ENCODE measurements at regions of chr10 and their contacts with region 1.

Region 1: GRCh38 chr10:116913695-116914094 is 64.4 kb downstream of the ENO4 start:
- DNase-seq: no peak

Region 2: DNA sequence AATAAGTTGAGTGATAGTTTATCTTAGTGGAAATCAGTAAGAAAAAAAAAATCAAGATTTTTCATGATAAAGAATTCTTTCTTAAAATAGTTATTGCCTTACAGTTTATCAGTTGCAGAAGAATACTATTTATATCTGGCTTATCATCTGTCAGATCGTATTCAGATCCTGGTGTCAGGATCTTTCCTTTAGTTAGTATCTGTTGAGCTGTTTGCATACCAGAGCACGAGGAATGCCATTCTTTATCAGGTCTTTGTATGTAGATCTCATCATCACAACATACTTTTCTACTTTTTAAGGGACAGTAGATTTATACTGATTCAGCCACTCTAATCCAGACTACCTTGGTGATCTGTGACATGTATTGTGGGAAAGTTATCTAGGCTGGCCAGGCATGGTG is 51.9 kb before region 1 on chr10:
- intact Hi-C with region 1: loop called in 1 of 2 experiments (anchors 2 kb)
- DNase-seq: no peak

Measured in posterior vena cava (tissue), 2 donors.